GM12878 (cell line): ENCODE measurements at regions of chr5 and their contacts with region 1.

Region 1: GRCh38 chr5:32489791-32490582 is 45.4 kb upstream of the ZFR start:
- DNase-seq: peak; percentile 19
- ATAC-seq: peak; percentile 95
- H3K4me3 ChIP-seq: no peak overlapping the region
- H3K27ac ChIP-seq: no peak overlapping the region
- H3K4me1 ChIP-seq: no peaks in the 10 kb centered on the region
- H3K27me3 ChIP-seq: no peaks in the 10 kb centered on the region
- CTCF ChIP-seq: peak; percentile 67 to 81 (median 74)
- EP300 ChIP-seq: no peak
- POLR2A ChIP-seq: no peak
- RAD21 ChIP-seq: peak; percentile 96

Region 2: DNA sequence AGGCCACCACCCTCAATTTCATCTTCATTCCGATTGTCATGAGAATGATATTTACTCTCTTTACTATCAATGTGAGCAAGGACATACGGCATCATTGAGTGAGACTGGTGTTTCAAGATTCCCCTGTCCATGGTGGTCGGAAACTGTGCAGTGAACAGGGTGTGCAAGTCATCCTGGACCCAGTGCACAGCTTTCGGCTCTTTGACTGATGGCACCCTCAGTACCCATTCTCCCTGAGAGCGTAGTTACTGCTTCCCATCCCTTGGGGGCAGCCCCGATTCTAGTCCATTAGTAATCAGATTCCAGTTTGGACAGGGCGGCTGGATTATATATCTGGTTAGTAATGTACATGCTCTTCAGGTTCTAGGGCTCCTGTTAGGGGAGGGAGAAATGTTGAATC is 33.6 kb after region 1 on chr5:
- CTCF ChIA-PET with region 1: interaction called, 23 read pairs
- POLR2A ChIA-PET with region 1: interaction called, 7 read pairs
- RAD21 ChIA-PET with region 1: interaction called, 3 read pairs
- SMC1A ChIA-PET with region 1: interaction called, 9 read pairs
- in situ Hi-C with region 1: no loop called
- intact Hi-C with region 1: no loop called
- DNase-seq: no peak
- ATAC-seq: peak; percentile 77
- H3K4me3 ChIP-seq: no peak overlapping the region
- H3K27ac ChIP-seq: no peak overlapping the region
- H3K4me1 ChIP-seq: no peaks in the 10 kb centered on the region
- H3K27me3 ChIP-seq: no peaks in the 10 kb centered on the region; a peak in 1 of 4 replicates
- CTCF ChIP-seq: 0 out of 6 replicates have a peak, but pooled peaks of 1 of the 3 experiments have one; percentile 10
- EP300 ChIP-seq: no peak
- POLR2A ChIP-seq: no peak
- RAD21 ChIP-seq: no peak

Region 3: DNA sequence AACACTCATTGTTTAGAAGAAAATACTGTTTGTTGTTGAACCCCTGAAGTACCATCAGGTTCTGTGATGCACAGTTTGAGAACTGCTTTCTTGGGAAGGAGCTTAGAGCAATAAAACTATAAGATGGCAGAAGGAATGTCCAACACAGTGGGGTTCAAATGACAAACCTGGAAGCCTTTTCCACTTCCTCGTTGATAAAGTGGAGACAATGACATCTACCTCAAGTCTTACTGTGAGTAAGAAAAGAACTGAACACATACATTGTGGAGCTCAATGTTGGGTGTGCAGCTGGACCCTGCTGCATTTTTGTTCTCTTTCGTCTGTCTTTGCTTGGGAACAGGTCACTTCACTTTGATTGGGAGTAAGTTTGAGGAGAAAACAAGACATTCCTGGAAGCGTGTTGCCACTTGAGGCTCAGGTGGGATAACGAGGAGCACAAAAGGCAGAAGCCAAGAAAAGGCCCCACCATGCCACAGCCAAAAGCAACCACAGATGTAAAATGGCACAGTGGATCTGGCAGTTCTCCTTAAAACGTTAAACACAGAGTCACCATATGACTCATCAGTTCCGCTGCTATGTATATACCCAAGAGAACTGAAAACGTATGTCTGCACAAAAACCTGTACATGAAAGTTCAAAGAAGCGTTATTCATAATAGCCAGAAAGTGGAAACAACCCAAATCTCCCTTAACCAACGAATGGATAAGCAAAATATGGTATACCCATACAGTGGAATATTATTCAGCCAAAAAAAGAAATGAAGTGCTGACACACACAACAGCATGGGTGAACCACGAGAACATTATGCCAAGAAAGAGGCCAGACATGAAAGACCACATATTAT is 52.5 kb after region 1 on chr5:
- CTCF ChIA-PET with region 1: interaction called, 16 read pairs
- POLR2A ChIA-PET with region 1: no interaction called
- RAD21 ChIA-PET with region 1: interaction called, 9 read pairs
- SMC1A ChIA-PET with region 1: interaction called, 16 read pairs
- in situ Hi-C with region 1: no loop called
- intact Hi-C with region 1: no loop called
- DNase-seq: peak; percentile 97
- ATAC-seq: peak; percentile 69
- H3K4me3 ChIP-seq: peak overlapping the region; percentile 12; the same call in 1 of the 2 replicates
- H3K27ac ChIP-seq: peak overlapping the region; percentile 96
- H3K4me1 ChIP-seq: peaks cover 55% of the 10 kb centered on the region
- H3K27me3 ChIP-seq: no peaks in the 10 kb centered on the region
- CTCF ChIP-seq: no peak
- EP300 ChIP-seq: peak; percentile 94 to 96
- POLR2A ChIP-seq: 0 out of 2 replicates have a peak, but pooled peaks have one; percentile 39
- RAD21 ChIP-seq: peak; percentile 8; the same call in 1 of the 2 replicates

Region 4: GRCh38 chr5:32595118-32595517 is 105.1 kb after region 1 on chr5:
- CTCF ChIA-PET with region 1: interaction called, 353 read pairs
- POLR2A ChIA-PET with region 1: interaction called, 31 read pairs
- RAD21 ChIA-PET with region 1: interaction called, 258 read pairs
- SMC1A ChIA-PET with region 1: interaction called, 273 read pairs
- in situ Hi-C with region 1: no loop called
- intact Hi-C with region 1: no loop called
- DNase-seq: no peak
- ATAC-seq: peak; percentile 46
- H3K4me3 ChIP-seq: peak overlapping the region; percentile 29; the same call in 1 of the 2 replicates
- H3K27ac ChIP-seq: no peak overlapping the region
- H3K4me1 ChIP-seq: no peaks in the 10 kb centered on the region; the same call in none of the 2 replicates
- H3K27me3 ChIP-seq: no peaks in the 10 kb centered on the region
- CTCF ChIP-seq: no peak
- EP300 ChIP-seq: no peak
- POLR2A ChIP-seq: no peak
- RAD21 ChIP-seq: no peak

Region 5: DNA sequence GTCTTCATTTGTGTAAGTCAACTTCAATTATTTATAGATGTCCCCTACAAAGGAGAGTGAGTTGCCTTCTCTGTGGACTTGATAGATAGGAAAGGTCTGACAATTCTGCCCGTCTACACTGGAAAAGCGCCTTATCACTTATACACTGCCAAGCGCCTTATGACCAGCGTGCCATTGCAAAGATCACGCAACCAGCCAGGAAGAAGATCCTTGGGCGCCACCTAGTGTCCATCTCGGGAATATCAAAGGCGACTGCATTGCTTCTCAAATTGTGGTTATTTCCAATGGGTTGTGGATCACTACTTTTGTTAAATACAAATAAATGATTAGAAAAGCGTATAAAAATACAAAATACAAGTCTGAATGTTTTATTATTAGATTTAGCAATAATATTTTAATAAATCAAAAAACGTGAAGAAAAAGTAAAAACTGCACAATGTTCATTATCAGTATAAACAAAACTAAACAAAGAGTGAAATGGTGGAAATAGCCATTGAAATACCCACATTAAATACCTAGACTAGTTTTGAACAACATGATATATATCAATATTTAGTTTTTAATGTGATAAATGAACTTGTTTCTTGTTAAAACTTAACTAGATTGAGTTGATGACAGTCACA is 123.2 kb after region 1 on chr5:
- CTCF ChIA-PET with region 1: interaction called, 118 read pairs
- POLR2A ChIA-PET with region 1: interaction called, 3 read pairs
- RAD21 ChIA-PET with region 1: interaction called, 58 read pairs
- SMC1A ChIA-PET with region 1: interaction called, 86 read pairs
- in situ Hi-C with region 1: loop called (anchors 5 kb)
- intact Hi-C with region 1: loop called (anchors 1 kb)
- DNase-seq: peak; percentile 46
- ATAC-seq: peak; percentile 90
- H3K4me3 ChIP-seq: no peak overlapping the region
- H3K27ac ChIP-seq: no peak overlapping the region
- H3K4me1 ChIP-seq: no peaks in the 10 kb centered on the region
- H3K27me3 ChIP-seq: no peaks in the 10 kb centered on the region
- CTCF ChIP-seq: peak; percentile 80 to 96 (median 95); a peak in 5 of 6 replicates
- EP300 ChIP-seq: no peak
- POLR2A ChIP-seq: no peak
- RAD21 ChIP-seq: peak; percentile 98

Region 6: DNA sequence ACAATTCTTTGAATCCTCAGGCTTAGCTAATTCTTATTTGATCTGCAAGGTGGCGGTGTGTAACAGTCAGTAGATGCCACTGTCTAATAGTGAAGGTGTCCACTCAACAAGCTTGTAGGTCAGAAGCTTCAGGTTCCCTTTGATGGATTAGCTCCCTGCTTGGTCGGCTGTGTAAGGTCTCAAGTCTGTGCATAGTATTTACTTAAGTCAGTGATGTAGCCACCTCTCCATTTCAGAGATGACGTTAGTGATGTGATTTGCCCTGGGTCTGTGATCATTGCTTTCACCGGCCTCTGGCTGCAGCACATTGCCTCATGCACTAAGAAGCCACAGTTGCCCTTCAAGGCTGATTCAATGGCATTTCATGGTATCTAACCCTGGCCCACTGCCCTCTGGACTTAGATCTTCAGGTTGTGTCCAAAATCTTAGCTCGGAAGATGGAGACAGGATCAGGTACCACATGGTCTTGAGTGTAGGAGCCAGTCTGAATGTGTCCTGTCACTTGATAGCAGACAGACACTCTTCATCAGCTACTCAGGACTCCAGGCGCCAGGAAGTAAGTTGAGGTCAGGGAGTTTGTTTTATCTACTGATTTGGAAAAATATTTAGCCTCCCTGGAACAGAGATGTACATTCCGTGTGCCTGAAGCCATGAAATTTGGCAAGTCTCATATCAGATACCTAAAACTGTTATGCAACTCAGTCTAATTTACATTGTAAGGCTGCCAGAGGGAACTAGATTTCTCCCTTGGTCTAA is 138.2 kb after region 1 on chr5:
- CTCF ChIA-PET with region 1: interaction called, 5 read pairs
- POLR2A ChIA-PET with region 1: no interaction called
- RAD21 ChIA-PET with region 1: no interaction called
- SMC1A ChIA-PET with region 1: interaction called, 12 read pairs
- in situ Hi-C with region 1: no loop called
- intact Hi-C with region 1: no loop called
- DNase-seq: no peak
- ATAC-seq: no peak
- H3K4me3 ChIP-seq: no peak overlapping the region
- H3K27ac ChIP-seq: no peak overlapping the region
- H3K4me1 ChIP-seq: no peaks in the 10 kb centered on the region
- H3K27me3 ChIP-seq: no peaks in the 10 kb centered on the region
- CTCF ChIP-seq: no peak
- EP300 ChIP-seq: no peak
- POLR2A ChIP-seq: no peak
- RAD21 ChIP-seq: 0 out of 2 replicates have a peak, but pooled peaks have one; percentile 3